ENCODE measurements at regions of chr2 and their contacts with region 1.

Region 1: GRCh38 chr2:226984750-226985582 is 149.1 kb downstream of the RHBDD1 start:
- DNase-seq: peak; percentile 12 to 28
- ATAC-seq: peak; percentile 79 to 92
- H3K4me3 ChIP-seq: no peak overlapping the region
- H3K27ac ChIP-seq: peak overlapping the region; percentile 8 to 61 (median 30)
- H3K4me1 ChIP-seq: peaks cover 11 to 18% of the 10 kb centered on the region in 2 donors
- H3K27me3 ChIP-seq: no peaks in the 10 kb centered on the region
- CTCF ChIP-seq: peak; percentile 52 to 73 (median 68)
- POLR2A ChIP-seq: no peak

Region 2: GRCh38 chr2:225668606-225669266 is 1316.2 kb before region 1 on chr2:
- in situ Hi-C with region 1: loop called (anchors 5 to 10 kb)
- intact Hi-C with region 1: loop called (anchors 1 kb)
- DNase-seq: no peak
- ATAC-seq: peak in 1 of 2 donors; percentile 47
- H3K4me3 ChIP-seq: no peak overlapping the region
- H3K27ac ChIP-seq: no peak overlapping the region
- H3K4me1 ChIP-seq: peaks cover 0 to 3% of the 10 kb centered on the region in 2 donors
- H3K27me3 ChIP-seq: no peaks in the 10 kb centered on the region
- CTCF ChIP-seq: peak in 3 of 5 experiments; percentile 39 to 53 (median 42)
- POLR2A ChIP-seq: no peak

Region 3: GRCh38 chr2:225889446-225889850 is 1095.5 kb before region 1 on chr2:
- in situ Hi-C with region 1: loop called (anchors 5 to 25 kb)
- intact Hi-C with region 1: loop called (anchors 1 kb)
- DNase-seq: peak in 1 of 2 donors; percentile 3
- ATAC-seq: peak; percentile 80 to 83
- H3K4me3 ChIP-seq: no peak overlapping the region
- H3K27ac ChIP-seq: no peak overlapping the region
- H3K4me1 ChIP-seq: peaks cover 0 to 4% of the 10 kb centered on the region in 2 donors
- H3K27me3 ChIP-seq: no peaks in the 10 kb centered on the region
- CTCF ChIP-seq: peak; percentile 62 to 92 (median 76)
- POLR2A ChIP-seq: no peak

Region 4: DNA sequence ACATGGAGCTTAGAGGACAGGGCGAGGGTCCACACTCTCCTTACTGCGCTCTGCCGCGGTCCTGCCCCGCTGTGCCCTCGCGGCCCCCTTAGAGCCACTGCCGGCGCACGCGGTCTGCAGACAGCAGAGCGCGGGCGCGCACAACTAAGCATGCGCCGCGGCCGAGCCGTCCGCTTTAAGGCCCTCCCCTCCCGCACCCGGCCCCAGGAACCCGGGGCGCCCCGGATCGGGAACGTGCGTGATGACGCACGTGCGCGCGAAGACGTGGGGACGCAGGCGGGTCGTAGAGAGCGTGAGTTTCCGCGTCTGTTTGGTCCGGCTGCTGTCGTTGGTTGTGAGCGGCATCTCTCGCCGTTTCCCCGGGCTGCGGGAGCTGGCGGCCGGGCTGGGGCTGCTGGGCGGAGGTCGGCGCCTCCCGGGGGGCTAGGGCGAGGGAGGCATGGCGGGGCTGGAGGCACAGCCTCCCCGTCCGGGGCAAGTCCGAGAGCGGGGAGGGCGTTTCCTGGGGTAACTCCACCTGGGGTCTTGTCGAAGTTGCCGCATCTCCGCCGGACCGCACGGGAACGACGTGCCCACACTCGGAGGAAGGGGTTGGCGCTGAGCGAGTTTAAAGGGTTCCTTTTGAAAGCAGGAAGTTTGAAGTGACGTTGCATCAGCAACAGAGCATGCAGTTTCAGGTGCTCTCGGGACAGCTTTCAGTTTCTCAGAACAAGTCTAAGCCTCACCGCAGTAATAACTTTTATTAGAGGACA is 149.0 kb before region 1 on chr2 and contains the start of gene RHBDD1:
- in situ Hi-C with region 1: no loop called
- intact Hi-C with region 1: loop called (anchors 10 kb)
- DNase-seq: peak; percentile 89 to 92
- ATAC-seq: peak; percentile 96 to 97
- H3K4me3 ChIP-seq: peak within 1 kb of the TSS; percentile 79 to 94 (median 90)
- H3K27ac ChIP-seq: peak within 1 kb of the TSS; percentile 96 to 99 (median 97)
- H3K4me1 ChIP-seq: peaks cover 25 to 40% of the 10 kb centered on the region in 2 donors
- H3K27me3 ChIP-seq: no peaks in the 10 kb centered on the region
- CTCF ChIP-seq: no peak
- POLR2A ChIP-seq: peak; percentile 86 to 91
- total RNA-seq, gene RHBDD1: 6.2 to 14.2 (median 8.7) TPM